OCI-LY7 (cell line): ENCODE measurements at regions of chr1 and their contacts with region 1.

Region 1: GRCh38 chr1:167263819-167264464 is 43.3 kb downstream of the POU2F1 start:
- DNase-seq: peak; percentile 27
- H3K4me3 ChIP-seq: no peak overlapping the region
- H3K27ac ChIP-seq: no peak overlapping the region
- H3K4me1 ChIP-seq: peaks cover 32% of the 10 kb centered on the region
- CTCF ChIP-seq: no peak

Region 2: DNA sequence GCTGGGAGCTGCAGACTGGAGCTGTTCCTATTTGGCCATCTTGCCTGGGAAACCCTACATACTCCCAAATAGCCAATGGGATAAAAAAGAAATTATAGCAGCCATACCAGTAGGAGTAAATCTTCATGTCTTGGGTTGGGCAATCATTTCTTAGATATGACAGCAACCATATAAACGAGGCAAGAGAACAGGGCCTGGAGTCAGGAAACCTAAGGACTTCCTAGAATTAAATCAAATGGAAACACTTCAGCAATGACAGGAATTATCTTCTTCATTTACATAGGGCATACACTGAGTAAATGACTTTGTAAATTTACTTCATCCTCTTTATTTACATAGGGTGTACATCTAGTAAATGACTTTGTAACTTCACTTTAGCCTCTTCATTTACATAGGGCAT is 711.2 kb before region 1 on chr1:
- CTCF ChIA-PET with region 1: no interaction called
- POLR2A ChIA-PET with region 1: no interaction called
- intact Hi-C with region 1: no loop called
- DNase-seq: no peak
- H3K4me3 ChIP-seq: no peak overlapping the region
- H3K27ac ChIP-seq: no peak overlapping the region
- H3K4me1 ChIP-seq: no peaks in the 10 kb centered on the region
- CTCF ChIP-seq: no peak

Region 3: DNA sequence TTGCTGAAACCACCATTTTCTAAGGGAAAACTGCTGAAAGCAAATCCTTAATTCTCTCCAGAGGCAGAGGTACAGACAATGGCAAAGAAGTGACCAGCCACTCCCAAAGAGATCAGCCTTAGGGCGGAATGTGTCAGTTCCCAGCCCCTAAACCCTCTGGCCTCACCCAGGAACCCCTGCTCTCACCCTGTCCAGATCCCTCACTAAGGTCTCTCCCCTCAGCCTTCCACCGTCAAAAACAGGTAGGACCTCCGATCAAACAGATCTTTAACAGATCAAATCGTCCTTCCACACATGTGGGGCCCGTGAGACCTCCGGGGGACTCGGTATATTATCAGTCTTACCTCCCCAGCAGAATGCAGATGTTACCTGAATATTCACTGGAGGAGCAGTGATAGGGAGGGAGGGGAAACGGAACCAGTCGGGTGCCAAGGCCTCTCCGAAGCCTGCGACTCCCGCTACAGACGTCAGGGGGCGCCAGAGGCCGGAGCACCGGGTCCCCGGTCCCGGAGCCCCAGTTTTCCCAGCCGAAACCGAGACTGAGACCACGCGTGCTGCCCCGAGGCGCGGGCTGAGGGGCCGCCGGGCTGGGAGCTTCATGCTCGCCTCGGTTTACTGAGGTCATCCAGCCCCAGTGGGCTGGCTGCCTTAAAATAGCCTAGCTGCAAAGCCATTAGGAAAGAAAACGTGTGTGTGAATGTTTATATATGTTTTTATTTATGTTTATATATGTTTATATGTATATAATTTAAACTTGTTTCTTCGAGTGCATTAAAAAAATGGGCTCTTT is 197.4 kb before region 1 on chr1:
- CTCF ChIA-PET with region 1: no interaction called
- POLR2A ChIA-PET with region 1: no interaction called
- intact Hi-C with region 1: loop called (anchors 1 kb)
- DNase-seq: peak; percentile 73
- H3K4me3 ChIP-seq: peak overlapping the region; percentile 44
- H3K27ac ChIP-seq: no peak overlapping the region
- H3K4me1 ChIP-seq: no peaks in the 10 kb centered on the region
- CTCF ChIP-seq: peak; percentile 96

Region 4: GRCh38 chr1:167082511-167083027 is 181.4 kb before region 1 on chr1:
- CTCF ChIA-PET with region 1: no interaction called
- POLR2A ChIA-PET with region 1: no interaction called
- intact Hi-C with region 1: no loop called
- DNase-seq: no peak
- H3K4me3 ChIP-seq: no peak overlapping the region
- H3K27ac ChIP-seq: no peak overlapping the region
- H3K4me1 ChIP-seq: no peaks in the 10 kb centered on the region
- CTCF ChIP-seq: no peak

Region 5: DNA sequence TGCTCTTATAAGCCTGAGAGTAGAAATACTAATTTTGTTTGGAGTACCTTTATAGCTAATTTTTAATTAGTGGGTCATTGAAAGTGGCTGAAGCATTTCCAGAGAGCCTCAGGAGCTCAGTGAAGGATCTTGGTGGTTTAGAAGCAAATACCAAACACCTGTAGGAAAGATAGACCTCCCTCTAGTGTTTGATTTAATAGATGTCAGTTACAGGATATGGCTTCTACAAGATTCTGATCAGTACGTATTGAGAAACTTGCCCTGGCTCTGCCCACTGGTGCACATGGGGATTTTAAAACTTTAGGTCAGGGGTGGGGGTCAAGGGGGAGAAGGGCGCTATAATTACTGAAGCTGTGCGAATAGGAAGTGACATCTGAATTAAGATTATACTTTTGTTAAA is 78.9 kb after region 1 on chr1:
- CTCF ChIA-PET with region 1: interaction called, 3 read pairs
- POLR2A ChIA-PET with region 1: no interaction called
- intact Hi-C with region 1: loop called (anchors 2 kb)
- DNase-seq: peak; percentile 59
- H3K4me3 ChIP-seq: no peak overlapping the region
- H3K27ac ChIP-seq: no peak overlapping the region
- H3K4me1 ChIP-seq: peaks cover 18% of the 10 kb centered on the region
- CTCF ChIP-seq: peak; percentile 80

Region 6: DNA sequence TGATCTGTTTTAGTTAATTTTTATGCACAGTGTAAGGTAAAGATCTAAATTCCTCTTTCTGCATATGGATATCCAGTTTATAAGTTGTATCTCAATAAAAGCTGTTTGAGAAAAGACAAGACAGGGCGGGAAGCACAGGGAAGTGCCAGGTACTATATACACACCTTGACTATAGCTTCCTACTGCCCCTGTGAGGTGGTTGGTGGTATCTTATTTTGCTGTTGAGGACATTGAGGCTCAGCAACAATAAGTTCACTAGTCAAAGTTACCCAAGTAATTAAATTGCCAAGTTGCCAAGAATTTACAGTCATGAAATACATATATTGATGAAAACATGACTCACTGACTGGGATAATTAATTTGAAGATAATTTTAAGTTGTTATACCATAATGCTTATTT is 145.2 kb after region 1 on chr1:
- CTCF ChIA-PET with region 1: no interaction called
- POLR2A ChIA-PET with region 1: interaction called, 3 read pairs
- intact Hi-C with region 1: loop called (anchors 1 kb)
- DNase-seq: peak; percentile 59
- H3K4me3 ChIP-seq: no peak overlapping the region
- H3K27ac ChIP-seq: no peak overlapping the region
- H3K4me1 ChIP-seq: peaks cover 4% of the 10 kb centered on the region
- CTCF ChIP-seq: peak; percentile 79

Region 7: DNA sequence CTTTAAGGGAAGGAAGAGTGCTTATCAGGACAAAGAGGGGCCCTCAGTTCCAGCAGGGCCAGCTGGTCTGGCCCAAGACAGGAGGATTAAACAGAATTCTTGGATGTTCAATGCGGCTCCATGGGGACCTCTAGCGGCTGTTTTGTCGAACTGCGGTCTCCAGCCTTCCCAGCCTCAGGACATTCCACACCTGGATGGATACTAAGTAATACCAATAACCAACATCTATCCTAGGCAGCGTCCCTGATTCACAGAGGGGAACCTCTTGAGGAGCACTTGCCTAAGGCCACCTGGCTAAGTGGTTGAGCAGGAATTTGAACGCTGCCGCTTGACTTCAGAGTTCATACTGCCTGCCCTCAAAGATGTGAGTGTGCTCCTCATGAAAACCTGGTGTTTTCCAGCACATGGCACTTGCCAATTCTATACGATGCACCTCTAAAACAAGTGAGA is 269.9 kb after region 1 on chr1:
- CTCF ChIA-PET with region 1: no interaction called
- POLR2A ChIA-PET with region 1: no interaction called
- intact Hi-C with region 1: loop called (anchors 2 kb)
- DNase-seq: peak; percentile 73
- H3K4me3 ChIP-seq: no peak overlapping the region
- H3K27ac ChIP-seq: no peak overlapping the region
- H3K4me1 ChIP-seq: peaks cover 6% of the 10 kb centered on the region
- CTCF ChIP-seq: peak; percentile 99